ENCODE measurements at regions of chr15 and their contacts with region 1.

Region 1: GRCh38 chr15:49155110-49155833 is at the start of gene COPS2:
- DNase-seq: peak; percentile 96
- H3K4me3 Mint-ChIP-seq: peak within 1 kb of the TSS; percentile 100
- H3K27ac Mint-ChIP-seq: peak within 1 kb of the TSS; percentile 99
- H3K4me1 Mint-ChIP-seq: peaks cover 44% of the 10 kb centered on the region
- H3K27me3 Mint-ChIP-seq: no peaks in the 10 kb centered on the region
- total RNA-seq, gene COPS2: 54.8 to 61.7 TPM

Region 2: DNA sequence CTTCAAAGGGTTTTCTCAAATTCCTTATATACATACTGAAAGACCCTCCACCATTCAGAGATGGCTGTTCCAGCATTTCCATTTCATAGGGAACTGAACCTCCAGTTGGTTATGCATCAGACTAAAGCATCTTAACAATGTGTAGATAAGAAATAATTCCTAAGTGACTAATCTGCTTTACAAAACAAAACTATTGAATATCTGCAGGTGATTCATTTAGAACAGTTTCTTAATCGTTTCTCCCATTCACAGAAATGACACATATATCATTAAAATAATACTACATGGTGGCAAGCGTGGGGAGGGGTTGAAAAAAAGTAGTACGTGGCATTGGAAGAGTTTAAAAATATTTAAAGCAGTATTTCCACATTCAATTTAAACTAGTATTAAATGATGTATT is 19.4 kb before region 1 on chr15:
- CTCF ChIA-PET with region 1: no interaction called
- POLR2A ChIA-PET with region 1: no interaction called
- DNase-seq: no peak
- H3K4me3 Mint-ChIP-seq: no peak overlapping the region
- H3K27ac Mint-ChIP-seq: no peak overlapping the region
- H3K4me1 Mint-ChIP-seq: peaks cover 15% of the 10 kb centered on the region
- H3K27me3 Mint-ChIP-seq: no peaks in the 10 kb centered on the region

Region 3: GRCh38 chr15:49169880-49170597 is 14.8 kb after region 1 on chr15 and contains the start of gene GALK2:
- CTCF ChIA-PET with region 1: interaction called, 5 read pairs
- POLR2A ChIA-PET with region 1: interaction called, 10 read pairs
- DNase-seq: peak; percentile 89
- H3K4me3 Mint-ChIP-seq: peak within 1 kb of the TSS; percentile 87
- H3K27ac Mint-ChIP-seq: peak within 1 kb of the TSS; percentile 95
- H3K4me1 Mint-ChIP-seq: peaks cover 39% of the 10 kb centered on the region
- H3K27me3 Mint-ChIP-seq: no peaks in the 10 kb centered on the region
- total RNA-seq, gene GALK2: 20.2 to 23.4 TPM